GM12878 (cell line): ENCODE measurements at regions of chr20 and their contacts with region 1.

Region 1: GRCh38 chr20:25508078-25508770 is 77.1 kb downstream of the NINL start:
- DNase-seq: no peak
- ATAC-seq: no peak
- H3K4me3 ChIP-seq: no peak overlapping the region
- H3K27ac ChIP-seq: no peak overlapping the region
- H3K4me1 ChIP-seq: no peaks in the 10 kb centered on the region
- H3K27me3 ChIP-seq: no peaks in the 10 kb centered on the region
- CTCF ChIP-seq: no peak
- EP300 ChIP-seq: no peak
- POLR2A ChIP-seq: no peak
- RAD21 ChIP-seq: no peak

Region 2: GRCh38 chr20:25150016-25150415 is 358.2 kb before region 1 on chr20:
- CTCF ChIA-PET with region 1: no interaction called
- POLR2A ChIA-PET with region 1: no interaction called
- RAD21 ChIA-PET with region 1: no interaction called
- SMC1A ChIA-PET with region 1: no interaction called
- in situ Hi-C with region 1: loop called (anchors 10 kb)
- intact Hi-C with region 1: no loop called
- DNase-seq: no peak
- ATAC-seq: no peak
- H3K4me3 ChIP-seq: no peak overlapping the region
- H3K27ac ChIP-seq: no peak overlapping the region
- H3K4me1 ChIP-seq: no peaks in the 10 kb centered on the region
- H3K27me3 ChIP-seq: peaks cover 3 to 4% of the 10 kb centered on the region in 2 experiments
- CTCF ChIP-seq: no peak
- EP300 ChIP-seq: no peak
- POLR2A ChIP-seq: no peak
- RAD21 ChIP-seq: no peak

Region 3: GRCh38 chr20:25444556-25444955 is 63.7 kb before region 1 on chr20:
- CTCF ChIA-PET with region 1: no interaction called
- POLR2A ChIA-PET with region 1: no interaction called
- RAD21 ChIA-PET with region 1: no interaction called
- SMC1A ChIA-PET with region 1: no interaction called
- in situ Hi-C with region 1: loop called (anchors 10 kb)
- intact Hi-C with region 1: no loop called
- DNase-seq: no peak
- ATAC-seq: no peak
- H3K4me3 ChIP-seq: no peak overlapping the region
- H3K27ac ChIP-seq: no peak overlapping the region
- H3K4me1 ChIP-seq: no peaks in the 10 kb centered on the region
- H3K27me3 ChIP-seq: no peaks in the 10 kb centered on the region
- CTCF ChIP-seq: no peak
- EP300 ChIP-seq: no peak
- POLR2A ChIP-seq: no peak
- RAD21 ChIP-seq: no peak

Region 4: DNA sequence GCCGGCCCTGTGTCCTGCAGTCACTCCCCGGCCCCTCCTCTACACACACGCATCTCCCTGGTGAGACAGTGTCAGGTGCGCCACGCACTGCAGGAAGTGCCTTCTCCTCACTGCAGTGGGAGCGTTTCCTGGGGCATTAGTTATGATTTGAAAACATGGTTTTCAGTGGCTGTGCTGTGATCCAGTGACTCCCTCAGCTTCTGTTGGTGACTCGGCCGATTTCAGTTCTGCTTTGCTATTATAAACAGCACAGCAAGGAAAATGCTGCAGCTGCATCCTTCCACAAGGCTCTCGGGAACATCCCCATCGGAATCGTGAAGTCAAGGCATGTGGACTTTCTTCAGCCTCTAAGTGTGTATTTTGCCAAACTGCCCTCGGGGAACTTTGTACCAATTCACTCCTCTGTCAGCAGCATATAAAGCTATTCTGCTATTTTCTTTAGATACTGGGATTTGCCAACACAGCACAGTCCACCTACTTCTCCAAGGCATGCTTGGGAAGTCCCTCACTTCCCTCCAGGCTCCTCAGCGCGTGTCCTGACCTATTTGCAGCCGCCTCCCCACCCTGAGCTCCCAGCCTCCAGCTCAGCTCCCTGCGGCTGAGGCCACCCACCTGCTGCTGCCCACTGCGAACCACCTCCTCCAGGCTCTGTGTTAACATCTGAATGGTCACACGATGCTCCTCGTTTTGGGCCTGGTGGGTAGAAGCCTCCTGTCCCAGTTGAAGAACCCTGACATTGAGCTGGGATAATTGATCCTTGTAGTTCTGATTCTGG is 46.3 kb before region 1 on chr20:
- CTCF ChIA-PET with region 1: no interaction called
- POLR2A ChIA-PET with region 1: no interaction called
- RAD21 ChIA-PET with region 1: no interaction called
- SMC1A ChIA-PET with region 1: no interaction called
- in situ Hi-C with region 1: loop called (anchors 10 kb)
- intact Hi-C with region 1: no loop called
- DNase-seq: no peak
- ATAC-seq: no peak; the same call in 2 of the 3 replicates
- H3K4me3 ChIP-seq: no peak overlapping the region
- H3K27ac ChIP-seq: no peak overlapping the region
- H3K4me1 ChIP-seq: no peaks in the 10 kb centered on the region
- H3K27me3 ChIP-seq: no peaks in the 10 kb centered on the region; a peak in 1 of 4 replicates
- CTCF ChIP-seq: no peak
- EP300 ChIP-seq: no peak
- POLR2A ChIP-seq: no peak
- RAD21 ChIP-seq: no peak

Region 5: GRCh38 chr20:25623736-25624499 is 115.7 kb after region 1 on chr20 and contains the start of gene NANP:
- CTCF ChIA-PET with region 1: no interaction called
- POLR2A ChIA-PET with region 1: no interaction called
- RAD21 ChIA-PET with region 1: no interaction called
- SMC1A ChIA-PET with region 1: no interaction called
- in situ Hi-C with region 1: no loop called
- intact Hi-C with region 1: no loop called
- DNase-seq: peak; percentile 86
- ATAC-seq: peak; percentile 88
- H3K4me3 ChIP-seq: peak within 1 kb of the TSS; percentile 86
- H3K27ac ChIP-seq: peak within 1 kb of the TSS; percentile 93
- H3K4me1 ChIP-seq: peaks cover 3% of the 10 kb centered on the region; the same call in 1 of the 2 replicates
- H3K27me3 ChIP-seq: no peaks in the 10 kb centered on the region
- CTCF ChIP-seq: 0 out of 6 replicates have a peak, but pooled peaks of 1 of the 3 experiments have one; percentile 10
- EP300 ChIP-seq: peak in 1 of 2 experiments; percentile 17; a peak in 1 of 4 replicates
- POLR2A ChIP-seq: peak; percentile 86
- RAD21 ChIP-seq: no peak
- polyA plus RNA-seq, gene NANP: 4.2 to 4.6 TPM

Region 6: DNA sequence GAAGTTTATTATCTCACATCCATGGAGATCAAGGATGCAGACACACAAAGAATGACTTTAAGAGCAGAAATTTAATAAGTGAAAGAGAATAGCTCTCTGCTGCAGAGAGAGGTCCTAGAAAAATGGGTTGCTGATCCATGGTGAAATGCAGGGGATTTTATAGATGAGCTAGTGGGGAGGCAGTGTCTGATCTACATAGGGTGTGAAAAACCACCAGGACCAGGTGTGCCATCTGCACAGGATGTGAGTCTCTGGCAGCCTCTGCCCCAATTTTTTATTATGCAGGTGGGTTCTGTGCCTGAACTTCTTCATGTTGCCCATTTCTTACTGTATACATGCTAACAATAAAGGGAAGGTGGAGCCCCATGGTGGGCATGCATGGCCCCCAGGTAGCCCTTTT is 135.5 kb after region 1 on chr20:
- CTCF ChIA-PET with region 1: no interaction called
- POLR2A ChIA-PET with region 1: no interaction called
- RAD21 ChIA-PET with region 1: no interaction called
- SMC1A ChIA-PET with region 1: no interaction called
- in situ Hi-C with region 1: no loop called
- intact Hi-C with region 1: no loop called
- DNase-seq: no peak
- ATAC-seq: no peak
- H3K4me3 ChIP-seq: no peak overlapping the region
- H3K27ac ChIP-seq: no peak overlapping the region
- H3K4me1 ChIP-seq: no peaks in the 10 kb centered on the region
- H3K27me3 ChIP-seq: no peaks in the 10 kb centered on the region
- CTCF ChIP-seq: no peak
- EP300 ChIP-seq: no peak
- POLR2A ChIP-seq: no peak
- RAD21 ChIP-seq: no peak

Region 7: GRCh38 chr20:26163890-26164289 is 655.7 kb after region 1 on chr20:
- CTCF ChIA-PET with region 1: no interaction called
- POLR2A ChIA-PET with region 1: no interaction called
- RAD21 ChIA-PET with region 1: no interaction called
- SMC1A ChIA-PET with region 1: no interaction called
- in situ Hi-C with region 1: loop called (anchors 25 kb)
- intact Hi-C with region 1: no loop called
- DNase-seq: no peak
- ATAC-seq: no peak
- H3K4me3 ChIP-seq: no peak overlapping the region
- H3K27ac ChIP-seq: no peak overlapping the region
- H3K4me1 ChIP-seq: no peaks in the 10 kb centered on the region
- H3K27me3 ChIP-seq: no peaks in the 10 kb centered on the region
- CTCF ChIP-seq: no peak
- EP300 ChIP-seq: no peak
- POLR2A ChIP-seq: no peak
- RAD21 ChIP-seq: no peak